ENCODE measurements at regions of chr6 and their contacts with region 1.

Region 1: GRCh38 chr6:49462927-49463611 is at the starts of genes CENPQ and MMUT:
- DNase-seq: peak; percentile 92
- ATAC-seq: peak; percentile 99
- H3K4me3 ChIP-seq: peak within 1 kb of the TSS; percentile 76 to 97
- H3K27ac ChIP-seq: peak within 1 kb of the TSS; percentile 17; the same call in 1 of the 2 replicates
- H3K4me1 ChIP-seq: peaks cover 3 to 14% of the 10 kb centered on the region in 2 experiments; a peak in 2 of 4 replicates
- H3K27me3 ChIP-seq: no peaks in the 10 kb centered on the region
- CTCF ChIP-seq: no peak
- POLR2A ChIP-seq: peak; percentile 41
- RAD21 ChIP-seq: no peak
- total RNA-seq, gene CENPQ: 11.3 TPM
- total RNA-seq, gene MMUT: 12.4 TPM

Region 2: GRCh38 chr6:49606696-49607390 is 143.8 kb after region 1 on chr6:
- CTCF ChIA-PET with region 1: no interaction called
- POLR2A ChIA-PET with region 1: no interaction called
- RAD21 ChIA-PET with region 1: no interaction called
- intact Hi-C with region 1: loop called (anchors 1 kb)
- DNase-seq: peak; percentile 93
- ATAC-seq: peak; percentile 95
- H3K4me3 ChIP-seq: peak overlapping the region in 1 of 2 experiments; percentile 43; a peak in 2 of 4 replicates
- H3K27ac ChIP-seq: no peak overlapping the region
- H3K4me1 ChIP-seq: peaks cover 0 to 12% of the 10 kb centered on the region in 2 experiments; a peak in 3 of 4 replicates
- H3K27me3 ChIP-seq: no peaks in the 10 kb centered on the region
- CTCF ChIP-seq: peak; percentile 79 to 97 (median 86)
- POLR2A ChIP-seq: no peak
- RAD21 ChIP-seq: peak; percentile 92

Measured in HCT116 (cell line).